Activated CD8-positive, alpha-beta memory T cell treated with anti-CD3 and anti-CD28 coated beads, Interleukin-2, amount 10 ng/mL, durations not matched to agents 7 days and 5 days (primary cell): ENCODE measurements at regions of chr1 and their contacts with region 1.

Region 1: DNA sequence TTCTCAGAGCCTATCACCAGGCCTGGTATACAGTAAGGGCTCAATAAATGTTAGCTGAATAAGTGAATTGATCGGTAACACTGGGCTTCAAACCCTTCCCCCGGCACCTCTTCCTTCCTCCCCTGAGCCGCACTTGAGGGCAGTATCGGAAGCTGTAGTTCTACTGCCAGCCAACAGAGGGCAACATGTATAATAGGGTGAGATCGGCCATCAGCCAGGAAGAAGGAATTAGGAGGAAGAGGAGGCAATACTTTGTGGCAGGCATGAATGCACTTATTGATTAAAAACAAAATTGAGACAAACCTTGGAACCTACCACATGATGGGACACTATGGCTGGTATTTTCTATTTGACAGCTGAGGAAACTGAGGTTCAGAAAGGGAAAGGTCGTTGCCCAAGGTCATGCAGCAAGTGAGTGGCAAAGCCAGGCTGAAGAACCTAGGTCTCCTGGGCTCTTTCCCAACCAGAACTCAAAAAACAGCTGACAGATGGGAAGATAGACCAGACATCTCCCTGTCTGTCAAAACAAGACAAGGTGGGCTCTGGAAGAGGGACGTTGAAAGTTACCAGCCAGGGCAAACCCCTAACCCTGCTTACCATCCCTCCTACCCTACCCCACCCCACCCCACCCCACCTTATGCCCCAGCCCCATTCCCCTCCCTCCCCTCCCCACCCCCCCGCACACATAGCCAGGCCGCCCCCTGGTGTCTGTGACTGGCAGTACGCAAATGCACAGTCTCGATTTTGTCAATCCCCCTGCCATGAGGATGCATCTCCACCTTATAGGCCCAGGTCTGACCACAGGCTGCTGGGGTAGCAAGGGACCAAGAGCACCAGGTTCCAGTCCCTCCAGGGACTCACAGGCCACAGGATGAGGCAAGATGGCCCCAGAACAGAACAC is 107.3 kb upstream of the RUNX3 start:
- DNase-seq: peak; percentile 80
- ATAC-seq: peak; percentile 35
- H3K4me3 Mint-ChIP-seq: no peak overlapping the region
- H3K27ac Mint-ChIP-seq: peak overlapping the region; percentile 35
- H3K4me1 Mint-ChIP-seq: peaks cover 28% of the 10 kb centered on the region
- H3K27me3 Mint-ChIP-seq: peaks cover 11% of the 10 kb centered on the region

Region 2: DNA sequence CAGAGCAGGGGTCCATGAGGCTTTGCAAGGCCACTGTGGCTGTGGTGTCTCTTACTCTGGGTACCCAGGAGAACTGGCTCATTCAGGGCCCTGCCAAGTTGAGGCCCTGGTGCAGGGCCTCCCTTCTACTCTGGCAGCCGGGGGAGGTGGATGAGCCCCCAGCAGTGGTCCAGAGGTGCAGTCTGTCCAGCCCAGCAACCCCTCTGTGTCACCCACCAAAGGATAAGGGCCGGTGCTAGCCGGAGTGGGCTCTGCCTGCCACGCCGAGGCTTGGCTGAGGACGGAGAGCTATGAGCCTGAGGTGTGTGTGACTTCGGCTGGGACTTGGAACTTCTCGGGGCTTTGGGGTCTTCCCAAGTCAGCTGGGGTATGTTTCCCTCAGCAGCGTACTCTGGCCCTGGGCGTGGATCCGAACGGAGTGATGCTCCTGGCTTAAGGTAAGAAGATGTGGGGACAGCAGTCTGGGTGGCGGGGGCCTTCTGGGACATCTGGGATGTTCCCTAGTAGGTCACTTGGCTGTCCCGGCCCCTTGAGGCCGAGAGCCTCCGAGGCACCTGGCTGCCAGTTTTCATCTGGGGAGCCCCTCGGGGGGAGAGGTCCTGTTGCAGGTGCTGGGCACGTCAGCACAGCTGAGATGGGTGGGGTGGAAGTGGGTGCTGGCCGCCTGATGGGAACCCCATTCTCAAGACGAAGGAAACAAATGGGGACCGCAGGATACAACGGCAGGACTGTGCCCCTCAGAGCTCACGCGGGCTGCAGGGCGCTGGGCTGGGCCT is 133.3 kb before region 1 on chr1:
- CTCF ChIA-PET with region 1: no interaction called
- DNase-seq: peak; percentile 39
- ATAC-seq: no peak
- H3K4me3 Mint-ChIP-seq: no peak overlapping the region
- H3K27ac Mint-ChIP-seq: no peak overlapping the region
- H3K4me1 Mint-ChIP-seq: peaks cover 28% of the 10 kb centered on the region
- H3K27me3 Mint-ChIP-seq: no peaks in the 10 kb centered on the region

Region 3: DNA sequence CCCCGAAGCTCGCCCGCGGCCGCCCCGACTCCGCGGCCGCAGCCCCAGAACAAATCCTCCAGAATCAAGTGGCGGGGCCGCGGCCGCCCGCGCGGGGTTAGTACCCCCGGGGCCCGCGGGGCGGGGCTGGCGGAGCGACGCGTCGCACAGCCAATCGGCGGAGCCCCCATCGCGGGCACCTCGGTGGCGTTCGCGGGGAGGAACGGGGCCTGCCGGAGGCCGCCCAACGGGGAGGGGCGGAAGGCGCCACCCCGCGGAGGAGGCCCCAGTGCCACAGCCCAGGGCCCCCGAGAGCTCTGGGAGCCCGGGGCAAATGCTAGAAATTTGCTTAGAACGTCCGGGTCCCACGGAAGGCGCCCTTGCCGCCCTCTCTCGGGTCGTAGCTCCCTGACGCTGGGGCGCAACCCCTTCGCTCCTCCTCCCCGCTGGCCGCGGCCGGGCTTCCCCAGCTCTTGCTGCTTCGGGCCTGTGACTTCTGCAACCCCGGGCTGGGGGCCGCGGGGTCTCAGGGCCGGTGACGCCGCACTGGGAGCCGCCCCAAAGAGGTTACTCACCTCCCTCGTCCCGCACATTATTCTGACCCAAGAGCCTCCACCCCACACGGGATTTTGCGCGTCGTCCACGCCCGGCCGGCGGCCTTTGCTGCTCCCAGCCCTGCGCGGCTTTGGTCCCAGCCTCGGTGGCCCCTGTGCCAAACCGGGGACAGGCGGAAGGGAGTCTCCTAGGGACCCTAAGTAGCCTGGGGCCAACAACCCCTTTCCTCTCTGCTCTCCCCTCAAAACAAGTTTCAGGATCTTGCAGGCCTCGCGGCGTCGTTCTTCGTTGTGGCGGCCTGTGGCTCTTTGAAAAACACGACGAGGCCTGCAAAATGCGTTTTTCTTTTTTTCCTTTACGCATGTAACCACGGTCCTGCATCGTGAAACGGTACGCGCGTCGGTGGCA is 106.9 kb before region 1 on chr1 and contains the start of gene RUNX3:
- CTCF ChIA-PET with region 1: interaction called, 58 read pairs
- DNase-seq: peak; percentile 94
- ATAC-seq: peak; percentile 73
- H3K4me3 Mint-ChIP-seq: peak within 1 kb of the TSS; percentile 80
- H3K27ac Mint-ChIP-seq: peak within 1 kb of the TSS; percentile 90
- H3K4me1 Mint-ChIP-seq: peaks cover 72% of the 10 kb centered on the region
- H3K27me3 Mint-ChIP-seq: no peaks in the 10 kb centered on the region
- total RNA-seq, gene RUNX3: 224 to 246 TPM

Region 4: DNA sequence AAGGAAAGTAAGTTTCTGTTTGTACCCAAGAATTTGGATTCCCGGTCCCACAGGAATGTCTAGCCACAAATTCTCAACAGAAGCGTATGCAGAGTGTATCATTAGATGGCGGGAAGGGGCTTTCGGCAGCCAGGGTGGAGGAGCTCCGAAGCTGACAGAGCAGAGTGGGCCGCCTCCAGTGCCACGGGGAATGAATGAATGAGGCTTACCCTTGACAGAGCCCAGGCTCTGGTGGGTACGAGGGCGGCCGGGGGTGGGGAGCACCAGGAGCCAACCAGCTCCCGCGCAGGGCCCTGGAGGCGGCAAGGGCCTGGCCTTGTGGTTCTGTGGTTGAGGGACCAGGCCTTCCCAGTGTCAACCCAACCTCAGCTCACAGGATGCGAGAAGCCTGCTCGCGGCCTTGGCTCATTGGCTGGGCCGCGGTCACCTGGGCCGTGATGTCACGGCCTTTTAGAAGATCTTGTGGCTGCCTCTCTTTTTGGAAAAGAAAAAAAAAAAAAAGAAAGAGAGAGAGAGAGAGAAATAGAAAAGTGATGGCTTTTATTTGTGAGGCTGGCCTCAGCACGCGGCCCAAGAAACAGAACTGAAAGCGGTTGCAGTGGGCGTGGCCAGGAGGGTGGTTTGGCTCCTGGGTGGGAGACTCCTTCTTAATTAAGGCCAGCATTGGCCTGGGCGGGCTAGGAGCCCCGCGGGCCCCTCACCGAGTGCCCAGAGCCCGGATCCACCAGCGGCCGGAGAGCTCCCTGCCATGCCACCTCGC is 72.4 kb before region 1 on chr1:
- CTCF ChIA-PET with region 1: interaction called, 338 read pairs
- DNase-seq: peak; percentile 99
- ATAC-seq: peak; percentile 70
- H3K4me3 Mint-ChIP-seq: peak overlapping the region; percentile 89
- H3K27ac Mint-ChIP-seq: peak overlapping the region; percentile 92
- H3K4me1 Mint-ChIP-seq: peaks cover 56% of the 10 kb centered on the region
- H3K27me3 Mint-ChIP-seq: no peaks in the 10 kb centered on the region

Region 5: GRCh38 chr1:24987875-24988557 is 49.4 kb before region 1 on chr1:
- CTCF ChIA-PET with region 1: interaction called, 21 read pairs
- DNase-seq: no peak
- ATAC-seq: no peak
- H3K4me3 Mint-ChIP-seq: no peak overlapping the region
- H3K27ac Mint-ChIP-seq: no peak overlapping the region
- H3K4me1 Mint-ChIP-seq: peaks cover 96% of the 10 kb centered on the region
- H3K27me3 Mint-ChIP-seq: no peaks in the 10 kb centered on the region

Region 6: GRCh38 chr1:25006770-25007169 is 30.7 kb before region 1 on chr1:
- CTCF ChIA-PET with region 1: interaction called, 12 read pairs
- DNase-seq: no peak
- ATAC-seq: no peak
- H3K4me3 Mint-ChIP-seq: no peak overlapping the region
- H3K27ac Mint-ChIP-seq: no peak overlapping the region
- H3K4me1 Mint-ChIP-seq: peaks cover 80% of the 10 kb centered on the region
- H3K27me3 Mint-ChIP-seq: no peaks in the 10 kb centered on the region

Region 7: DNA sequence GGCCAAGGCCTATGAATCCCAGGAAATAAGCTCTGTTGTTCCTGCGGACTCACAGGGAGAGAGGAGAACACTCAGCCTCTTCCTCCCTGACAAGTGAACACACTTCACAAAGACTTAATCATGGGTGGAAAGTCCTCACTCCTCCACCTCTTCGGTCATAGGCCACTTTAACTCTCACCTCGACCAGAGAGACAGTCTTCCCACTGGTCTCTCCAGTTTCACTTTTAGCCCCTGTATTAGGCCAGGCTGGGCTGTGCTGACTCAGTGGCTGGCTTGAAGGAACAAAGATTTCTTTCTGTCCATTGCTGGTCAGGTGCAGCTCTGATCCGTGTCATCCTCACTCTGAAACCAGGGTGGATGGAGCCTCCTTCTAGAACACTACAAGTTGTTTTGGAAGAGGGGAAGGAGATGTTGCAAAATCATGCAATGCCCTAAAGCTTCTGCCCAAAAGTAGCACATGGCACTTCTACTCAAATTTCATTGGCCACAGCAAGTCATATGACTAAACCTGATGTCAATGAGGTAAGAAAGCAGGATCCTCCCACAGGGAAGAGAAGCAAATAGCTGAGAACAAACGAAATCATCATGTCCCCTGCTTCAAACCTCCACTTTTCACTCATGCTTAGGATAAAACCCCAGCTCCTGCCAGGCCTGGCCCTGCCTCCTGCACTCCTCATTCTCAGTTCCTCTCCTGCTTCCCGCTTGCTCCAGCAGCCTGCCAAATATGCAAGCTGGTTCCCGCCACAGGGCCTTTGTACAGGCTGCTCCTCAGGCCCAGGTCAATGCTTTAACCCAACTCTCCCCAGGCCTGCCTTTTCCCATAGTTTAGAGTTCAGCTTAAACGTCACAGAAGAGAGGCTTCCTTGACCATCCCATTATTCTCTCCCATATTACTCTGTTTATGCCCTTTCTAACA is 43.1 kb after region 1 on chr1:
- CTCF ChIA-PET with region 1: interaction called, 12 read pairs
- DNase-seq: no peak
- ATAC-seq: no peak
- H3K4me3 Mint-ChIP-seq: no peak overlapping the region
- H3K27ac Mint-ChIP-seq: no peak overlapping the region
- H3K4me1 Mint-ChIP-seq: no peaks in the 10 kb centered on the region
- H3K27me3 Mint-ChIP-seq: peaks cover 40% of the 10 kb centered on the region